HCT116 (cell line): ENCODE measurements at regions of chr19 and their contacts with region 1.

Region 1: GRCh38 chr19:5048091-5048726 is 79.3 kb downstream of the KDM4B start:
- DNase-seq: no peak
- ATAC-seq: peak; percentile 94
- H3K4me3 ChIP-seq: no peak overlapping the region
- H3K27ac ChIP-seq: no peak overlapping the region; the same call in 1 of the 2 replicates
- H3K4me1 ChIP-seq: peaks cover 19 to 35% of the 10 kb centered on the region in 2 experiments
- H3K27me3 ChIP-seq: no peaks in the 10 kb centered on the region
- CTCF ChIP-seq: peak; percentile 63 to 95 (median 91); a peak in 5 of 6 replicates
- POLR2A ChIP-seq: no peak
- RAD21 ChIP-seq: peak; percentile 93

Region 2: DNA sequence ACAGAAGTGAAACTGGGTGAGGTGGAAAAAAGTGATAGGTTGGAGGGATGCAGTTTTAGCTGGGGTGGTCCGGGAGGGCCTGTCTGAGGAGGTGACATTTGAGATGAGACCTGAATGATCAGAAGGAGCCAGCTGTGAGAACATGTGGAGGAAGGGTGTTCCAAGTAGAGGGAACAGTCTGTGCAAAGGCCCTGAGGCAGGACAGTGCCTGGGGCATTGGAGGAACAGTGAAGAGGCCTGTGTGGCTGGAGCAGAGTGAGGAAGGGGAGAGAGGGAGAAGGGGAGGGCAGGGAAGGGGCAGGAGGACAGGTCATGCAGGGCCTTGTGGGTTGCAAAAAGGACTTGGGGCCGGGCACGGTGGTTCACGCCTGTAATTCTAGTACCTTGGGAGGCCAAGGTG is 328.7 kb after region 1 on chr19:
- CTCF ChIA-PET with region 1: interaction called, 7 read pairs
- POLR2A ChIA-PET with region 1: no interaction called
- RAD21 ChIA-PET with region 1: no interaction called
- intact Hi-C with region 1: loop called (anchors 1 kb)
- DNase-seq: no peak
- ATAC-seq: no peak
- H3K4me3 ChIP-seq: no peak overlapping the region
- H3K27ac ChIP-seq: no peak overlapping the region
- H3K4me1 ChIP-seq: peaks cover 0 to 4% of the 10 kb centered on the region in 2 experiments; a peak in 1 of 4 replicates
- H3K27me3 ChIP-seq: peaks cover 8% of the 10 kb centered on the region; the same call in 1 of the 2 replicates
- CTCF ChIP-seq: no peak
- POLR2A ChIP-seq: no peak
- RAD21 ChIP-seq: no peak

Region 3: DNA sequence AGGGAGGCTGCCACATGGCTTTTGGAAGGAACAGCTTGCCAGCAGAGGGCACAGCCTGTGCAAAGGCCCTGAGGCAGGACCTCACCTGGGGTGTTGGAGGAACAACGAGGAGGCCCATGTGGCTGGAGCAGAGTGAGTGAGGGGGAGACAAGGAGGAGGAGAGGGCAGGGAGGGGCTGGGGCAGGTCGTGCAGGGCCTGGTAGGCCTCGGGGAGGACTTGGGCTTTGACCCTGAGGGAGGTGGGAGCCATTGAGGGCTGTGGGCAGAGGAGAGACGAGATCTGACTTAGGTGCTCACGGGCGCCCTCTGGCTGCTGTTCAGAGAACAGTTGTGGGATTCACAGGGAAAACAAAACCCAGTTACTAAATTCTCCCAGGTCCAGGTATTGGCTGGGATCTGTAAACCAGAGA is 432.2 kb after region 1 on chr19:
- CTCF ChIA-PET with region 1: no interaction called
- POLR2A ChIA-PET with region 1: no interaction called
- RAD21 ChIA-PET with region 1: no interaction called
- intact Hi-C with region 1: loop called (anchors 2 kb)
- DNase-seq: peak; percentile 28
- ATAC-seq: peak; percentile 78
- H3K4me3 ChIP-seq: no peak overlapping the region
- H3K27ac ChIP-seq: no peak overlapping the region
- H3K4me1 ChIP-seq: no peaks in the 10 kb centered on the region
- H3K27me3 ChIP-seq: no peaks in the 10 kb centered on the region
- CTCF ChIP-seq: peak; percentile 33 to 72 (median 69); a peak in 4 of 6 replicates
- POLR2A ChIP-seq: no peak
- RAD21 ChIP-seq: peak; percentile 48